Dendritic cell treated with granulocyte-macrophage colony-stimulating factor and Interleukin-4, amounts not matched to agents 40 ng/mL and 50 ng/mL, for 4 days (primary cell): ENCODE measurements at regions of chr18 and their contacts with region 1.

Region 1: DNA sequence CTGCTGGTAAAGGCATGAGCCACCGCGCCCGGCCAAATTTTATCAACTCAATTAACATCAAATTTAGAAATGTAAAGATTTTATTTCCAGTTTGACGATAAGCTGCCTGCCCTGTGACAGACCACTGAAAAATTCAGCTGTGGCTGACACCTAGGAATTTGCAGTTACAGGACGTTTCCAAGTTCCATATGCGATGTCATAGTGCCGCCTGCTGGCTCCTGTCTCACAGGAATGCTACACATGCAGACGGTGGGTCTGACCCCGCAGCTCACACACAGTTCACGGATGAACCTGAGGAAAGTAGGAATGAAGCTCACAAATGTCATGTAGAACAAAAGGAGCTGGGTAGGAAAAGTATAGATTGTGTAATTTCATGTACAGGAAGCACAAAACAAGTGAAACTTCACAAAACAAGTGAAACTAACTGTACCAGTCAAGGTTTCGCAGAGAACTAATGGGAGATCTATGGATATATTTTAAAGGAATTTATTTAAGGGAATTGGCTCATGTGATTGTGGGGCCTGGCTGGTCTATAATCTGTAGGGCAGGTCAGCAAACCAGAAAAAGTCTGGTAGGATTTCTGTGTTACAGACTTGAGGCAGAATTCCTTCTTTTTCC is 13.2 kb upstream of the SEH1L start:
- H3K4me3 Mint-ChIP-seq: peak overlapping the region; percentile 50
- H3K27ac Mint-ChIP-seq: no peak overlapping the region
- H3K4me1 Mint-ChIP-seq: peaks cover 6% of the 10 kb centered on the region
- H3K27me3 Mint-ChIP-seq: no peaks in the 10 kb centered on the region

Region 2: DNA sequence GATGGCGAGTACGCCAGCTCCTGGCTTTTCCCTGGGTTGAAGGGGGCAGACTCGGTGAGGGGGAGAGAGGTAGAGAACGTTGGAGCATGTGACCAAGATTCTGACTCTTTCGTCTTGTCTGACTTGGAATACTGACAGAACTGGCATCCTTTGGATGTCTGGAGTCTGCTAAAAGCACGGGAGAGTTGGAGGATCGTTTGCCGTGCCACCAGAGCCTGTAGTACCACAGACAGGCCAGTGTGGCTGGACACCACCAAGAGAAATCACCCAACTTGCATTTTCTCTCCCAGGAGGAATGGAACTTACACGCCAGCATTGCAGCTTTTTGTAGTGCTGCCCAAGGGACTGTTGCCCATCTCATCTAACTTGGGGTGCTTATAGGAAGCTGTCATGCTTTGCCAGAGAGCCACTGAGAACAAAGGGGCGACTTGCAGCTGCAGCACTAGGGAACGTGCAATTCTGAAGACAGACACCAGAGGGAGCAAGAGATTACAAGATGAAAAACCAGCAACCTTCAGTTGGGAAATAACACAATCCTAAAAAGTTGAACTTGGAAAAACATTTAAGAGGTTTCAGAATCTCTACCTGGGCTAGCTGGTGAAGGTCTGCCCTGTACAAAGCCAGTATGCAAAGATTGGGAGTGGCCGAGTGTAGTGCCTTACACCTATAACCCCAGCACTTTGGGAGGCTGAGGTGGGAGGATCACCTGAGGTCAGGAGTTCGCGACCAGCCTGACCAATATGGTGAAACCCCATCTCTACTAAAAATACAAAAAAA is 207.6 kb before region 1 on chr18:
- intact Hi-C with region 1: loop called (anchors 1 kb)
- H3K4me3 Mint-ChIP-seq: no peak overlapping the region
- H3K27ac Mint-ChIP-seq: peak overlapping the region; percentile 47
- H3K4me1 Mint-ChIP-seq: peaks cover 5% of the 10 kb centered on the region
- H3K27me3 Mint-ChIP-seq: no peaks in the 10 kb centered on the region

Region 3: DNA sequence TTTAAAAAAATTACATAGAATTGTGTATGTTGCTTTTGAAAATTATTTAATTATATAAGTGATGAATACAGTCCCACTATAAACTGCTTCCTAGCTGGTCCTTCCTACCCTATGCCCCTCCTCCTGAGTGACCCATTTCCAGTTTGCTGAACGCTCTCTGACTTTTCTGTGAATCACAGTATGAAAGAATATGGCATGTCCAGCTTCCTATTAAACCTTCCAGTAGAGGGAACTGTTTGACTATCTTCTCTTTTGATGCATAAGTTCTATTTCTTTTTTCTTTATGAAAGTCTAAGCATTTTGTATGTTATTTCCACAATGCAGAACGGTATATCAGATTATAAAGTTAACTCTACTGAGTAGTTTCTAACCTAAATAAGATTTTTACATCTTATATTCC is 190.5 kb before region 1 on chr18:
- intact Hi-C with region 1: loop called (anchors 1 kb)
- H3K4me3 Mint-ChIP-seq: no peak overlapping the region
- H3K27ac Mint-ChIP-seq: no peak overlapping the region
- H3K4me1 Mint-ChIP-seq: peaks cover 5% of the 10 kb centered on the region
- H3K27me3 Mint-ChIP-seq: peaks cover under 1% of the 10 kb centered on the region

Region 4: DNA sequence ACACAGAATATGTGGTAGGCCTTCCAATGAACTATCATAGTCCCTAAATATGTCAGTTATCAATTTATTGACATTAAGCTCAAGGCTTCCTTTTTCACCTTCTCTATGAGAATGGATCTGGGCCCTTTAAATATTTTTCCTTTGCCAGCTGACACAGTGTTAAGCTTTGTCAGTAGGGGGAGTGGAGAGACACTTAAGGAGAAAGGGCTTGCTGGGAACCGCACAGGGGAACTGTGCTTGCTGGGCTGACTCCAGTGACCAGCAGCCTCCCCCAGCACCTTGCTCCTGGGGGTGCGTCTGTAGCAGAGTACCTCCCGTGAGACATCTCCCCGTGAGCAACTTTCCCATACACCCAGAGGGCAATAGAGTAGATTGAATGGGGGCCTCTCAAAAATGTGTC is 44.1 kb before region 1 on chr18:
- intact Hi-C with region 1: loop called (anchors 5 kb)
- H3K4me3 Mint-ChIP-seq: no peak overlapping the region
- H3K27ac Mint-ChIP-seq: peak overlapping the region; percentile 4
- H3K4me1 Mint-ChIP-seq: peaks cover 11% of the 10 kb centered on the region
- H3K27me3 Mint-ChIP-seq: peaks cover 7% of the 10 kb centered on the region